ENCODE measurements at regions of chr19 and their contacts with region 1.

Region 1: GRCh38 chr19:2151339-2152229 is at the start of gene AP3D1:
- DNase-seq: peak; percentile 99 to 100
- ATAC-seq: peak; percentile 88 to 97 (median 90)
- H3K4me3 ChIP-seq: peak within 1 kb of the TSS; percentile 44
- H3K4me3 Mint-ChIP-seq: peak within 1 kb of the TSS; percentile 88
- H3K27ac ChIP-seq: peak within 1 kb of the TSS; percentile 51
- H3K27ac Mint-ChIP-seq: peak within 1 kb of the TSS; percentile 90 to 93
- H3K4me1 ChIP-seq: peaks cover 33% of the 10 kb centered on the region
- H3K4me1 Mint-ChIP-seq: peaks cover 24 to 40% of the 10 kb centered on the region in 2 donors
- H3K27me3 ChIP-seq: no peaks in the 10 kb centered on the region
- H3K27me3 Mint-ChIP-seq: no peaks in the 10 kb centered on the region
- CTCF ChIP-seq: no peak
- total RNA-seq, gene AP3D1: 74.6 to 93.1 (median 87.5) TPM

Region 2: GRCh38 chr19:1825909-1826556 is 325.6 kb before region 1 on chr19:
- intact Hi-C with region 1: no loop called
- DNase-seq: peak; percentile 73 to 88
- ATAC-seq: peak; percentile 77 to 93 (median 84)
- H3K4me3 ChIP-seq: no peak overlapping the region
- H3K4me3 Mint-ChIP-seq: no peak overlapping the region
- H3K27ac ChIP-seq: no peak overlapping the region
- H3K27ac Mint-ChIP-seq: peak overlapping the region; percentile 31 to 53
- H3K4me1 ChIP-seq: peaks cover 9% of the 10 kb centered on the region
- H3K4me1 Mint-ChIP-seq: peaks cover 4 to 9% of the 10 kb centered on the region in 2 donors
- H3K27me3 ChIP-seq: no peaks in the 10 kb centered on the region
- H3K27me3 Mint-ChIP-seq: no peaks in the 10 kb centered on the region
- CTCF ChIP-seq: peak; percentile 70

Region 3: DNA sequence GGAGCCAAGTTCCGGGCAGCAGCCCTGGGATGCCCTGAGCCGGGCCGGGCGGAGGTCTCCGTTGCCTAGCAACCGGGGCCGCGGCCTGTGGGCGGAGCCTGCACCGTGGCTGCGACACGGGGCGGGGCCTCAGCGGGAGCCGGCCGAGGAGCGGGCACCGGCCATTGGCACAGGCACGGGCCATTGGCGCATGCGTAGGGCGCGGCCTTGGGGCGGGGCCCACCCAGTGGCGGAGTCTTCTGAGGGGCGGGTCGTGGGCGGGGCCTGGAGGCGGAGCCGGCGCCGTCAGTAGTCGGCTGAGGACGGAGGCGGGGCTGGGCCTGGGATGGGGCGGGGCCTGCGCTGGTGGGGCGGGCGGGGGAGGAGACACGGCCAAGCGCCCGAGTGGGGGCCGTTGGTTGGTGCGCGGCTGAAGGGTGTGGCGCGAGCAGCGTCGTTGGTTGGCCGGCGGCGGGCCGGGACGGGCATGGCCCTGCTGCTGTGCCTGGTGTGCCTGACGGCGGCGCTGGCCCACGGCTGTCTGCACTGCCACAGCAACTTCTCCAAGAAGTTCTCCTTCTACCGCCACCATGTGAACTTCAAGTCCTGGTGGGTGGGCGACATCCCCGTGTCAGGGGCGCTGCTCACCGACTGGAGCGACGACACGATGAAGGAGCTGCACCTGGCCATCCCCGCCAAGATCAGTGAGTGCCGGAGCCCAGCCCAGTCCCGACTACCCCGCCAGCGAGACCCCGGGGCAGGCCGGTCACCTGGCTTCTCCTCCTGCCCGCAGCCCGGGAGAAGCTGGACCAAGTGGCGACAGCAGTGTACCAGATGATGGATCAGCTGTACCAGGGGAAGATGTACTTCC is 54.9 kb before region 1 on chr19 and contains the start of gene IZUMO4:
- intact Hi-C with region 1: loop called (anchors 1 kb)
- DNase-seq: peak; percentile 99
- ATAC-seq: peak; percentile 80 to 92 (median 83)
- H3K4me3 ChIP-seq: peak within 1 kb of the TSS; percentile 69
- H3K4me3 Mint-ChIP-seq: peak within 1 kb of the TSS; percentile 98
- H3K27ac ChIP-seq: peak within 1 kb of the TSS; percentile 87
- H3K27ac Mint-ChIP-seq: peak within 1 kb of the TSS; percentile 88 to 90
- H3K4me1 ChIP-seq: peaks cover 52% of the 10 kb centered on the region
- H3K4me1 Mint-ChIP-seq: peaks cover 19 to 35% of the 10 kb centered on the region in 2 donors
- H3K27me3 ChIP-seq: no peaks in the 10 kb centered on the region
- H3K27me3 Mint-ChIP-seq: no peaks in the 10 kb centered on the region
- CTCF ChIP-seq: peak; percentile 25
- total RNA-seq, gene IZUMO4: 3.3 to 7.6 (median 7.1) TPM

Region 4: DNA sequence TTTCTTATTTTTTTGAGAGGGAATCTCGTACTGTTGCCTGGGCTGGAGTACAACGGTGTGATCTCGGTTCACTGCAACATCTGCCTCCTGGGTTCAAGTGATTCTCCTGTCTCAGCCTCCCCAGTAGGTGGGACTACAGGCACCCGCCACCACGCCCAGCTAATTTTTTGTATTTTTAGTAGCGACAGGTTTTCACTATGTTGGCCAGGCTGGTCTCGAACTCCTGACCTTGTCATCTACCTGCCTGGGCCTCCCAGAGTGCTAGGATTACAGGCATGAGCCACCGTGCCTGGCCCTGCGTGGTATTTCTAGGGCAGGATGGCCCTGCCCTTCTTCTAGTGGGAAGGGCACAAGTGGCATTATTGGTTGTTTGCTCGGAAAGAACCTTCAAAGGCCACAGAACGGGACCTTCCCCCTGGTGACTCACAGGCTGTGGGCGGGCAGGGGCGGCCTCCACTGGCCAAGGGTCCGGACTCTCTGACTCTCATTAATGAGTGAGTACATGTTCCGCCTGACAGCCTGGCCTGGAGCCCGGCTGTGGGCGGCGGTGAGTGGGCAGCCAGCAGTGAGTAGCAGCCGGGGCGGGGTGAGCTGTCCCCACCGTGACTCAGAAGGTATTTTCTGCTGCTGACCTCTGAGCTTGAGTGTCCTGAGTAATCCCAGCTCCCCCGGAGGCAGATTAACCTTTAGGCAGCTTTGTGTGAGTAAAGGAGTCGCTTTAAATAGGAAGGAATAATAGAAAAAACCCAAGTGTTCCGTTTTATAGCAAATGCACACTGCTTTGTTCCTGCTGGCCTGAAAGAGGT is 17.2 kb after region 1 on chr19:
- intact Hi-C with region 1: loop called (anchors 1 kb)
- DNase-seq: peak; percentile 70 to 86
- ATAC-seq: peak; percentile 68 to 87 (median 74)
- H3K4me3 ChIP-seq: peak overlapping the region; percentile 12
- H3K4me3 Mint-ChIP-seq: peak overlapping the region; percentile 89
- H3K27ac ChIP-seq: peak overlapping the region; percentile 95
- H3K27ac Mint-ChIP-seq: peak overlapping the region; percentile 94 to 98
- H3K4me1 ChIP-seq: peaks cover 75% of the 10 kb centered on the region
- H3K4me1 Mint-ChIP-seq: peaks cover 43 to 59% of the 10 kb centered on the region in 2 donors
- H3K27me3 ChIP-seq: no peaks in the 10 kb centered on the region
- H3K27me3 Mint-ChIP-seq: no peaks in the 10 kb centered on the region
- CTCF ChIP-seq: no peak

Region 5: GRCh38 chr19:2315818-2316353 is 164.3 kb after region 1 on chr19:
- intact Hi-C with region 1: loop called (anchors 5 kb)
- DNase-seq: peak; percentile 47 to 48
- ATAC-seq: peak; percentile 90 to 94 (median 90)
- H3K4me3 ChIP-seq: no peak overlapping the region
- H3K4me3 Mint-ChIP-seq: no peak overlapping the region
- H3K27ac ChIP-seq: peak overlapping the region; percentile 12
- H3K27ac Mint-ChIP-seq: peak overlapping the region in 1 of 2 donors; percentile 68
- H3K4me1 ChIP-seq: peaks cover 19% of the 10 kb centered on the region
- H3K4me1 Mint-ChIP-seq: peaks cover 8 to 9% of the 10 kb centered on the region in 2 donors
- H3K27me3 ChIP-seq: peaks cover 11% of the 10 kb centered on the region
- H3K27me3 Mint-ChIP-seq: peaks cover 9 to 17% of the 10 kb centered on the region in 2 donors
- CTCF ChIP-seq: peak; percentile 55

Region 6: GRCh38 chr19:2678043-2678671 is 526.6 kb after region 1 on chr19:
- intact Hi-C with region 1: no loop called
- DNase-seq: no peak
- ATAC-seq: peak in 1 of 3 donors; percentile 67
- H3K4me3 ChIP-seq: no peak overlapping the region
- H3K4me3 Mint-ChIP-seq: no peak overlapping the region
- H3K27ac ChIP-seq: peak overlapping the region; percentile 88
- H3K27ac Mint-ChIP-seq: no peak overlapping the region
- H3K4me1 ChIP-seq: peaks cover 25% of the 10 kb centered on the region
- H3K4me1 Mint-ChIP-seq: no peaks in the 10 kb centered on the region
- H3K27me3 ChIP-seq: no peaks in the 10 kb centered on the region
- H3K27me3 Mint-ChIP-seq: peaks cover 0 to 3% of the 10 kb centered on the region in 2 donors
- CTCF ChIP-seq: no peak

Measured in natural killer cell (primary cell).